Heart left ventricle (tissue), 16 donors: ENCODE measurements at regions of chr3 and their contacts with region 1.

Region 1: GRCh38 chr3:25633919-25634318 is 30.8 kb downstream of the TOP2B start:
- DNase-seq: no peak
- ATAC-seq: no peak
- H3K4me3 ChIP-seq: no peak overlapping the region
- H3K27ac ChIP-seq: no peak overlapping the region
- H3K4me1 ChIP-seq: peaks cover 0 to 4% (median 0%) of the 10 kb centered on the region in 12 donors
- H3K27me3 ChIP-seq: no peaks in the 10 kb centered on the region
- CTCF ChIP-seq: no peak
- POLR2A ChIP-seq: no peak

Region 2: GRCh38 chr3:25725813-25726210 is 91.9 kb after region 1 on chr3:
- intact Hi-C with region 1: loop called in 1 of 10 experiments (anchors 10 kb)
- DNase-seq: no peak
- ATAC-seq: no peak
- H3K4me3 ChIP-seq: no peak overlapping the region
- H3K27ac ChIP-seq: no peak overlapping the region
- H3K4me1 ChIP-seq: no peaks in the 10 kb centered on the region
- H3K27me3 ChIP-seq: no peaks in the 10 kb centered on the region
- CTCF ChIP-seq: no peak
- POLR2A ChIP-seq: no peak